Ascending aorta (tissue), 2 donors: ENCODE measurements at regions of chr2 and their contacts with region 1.

Region 1: DNA sequence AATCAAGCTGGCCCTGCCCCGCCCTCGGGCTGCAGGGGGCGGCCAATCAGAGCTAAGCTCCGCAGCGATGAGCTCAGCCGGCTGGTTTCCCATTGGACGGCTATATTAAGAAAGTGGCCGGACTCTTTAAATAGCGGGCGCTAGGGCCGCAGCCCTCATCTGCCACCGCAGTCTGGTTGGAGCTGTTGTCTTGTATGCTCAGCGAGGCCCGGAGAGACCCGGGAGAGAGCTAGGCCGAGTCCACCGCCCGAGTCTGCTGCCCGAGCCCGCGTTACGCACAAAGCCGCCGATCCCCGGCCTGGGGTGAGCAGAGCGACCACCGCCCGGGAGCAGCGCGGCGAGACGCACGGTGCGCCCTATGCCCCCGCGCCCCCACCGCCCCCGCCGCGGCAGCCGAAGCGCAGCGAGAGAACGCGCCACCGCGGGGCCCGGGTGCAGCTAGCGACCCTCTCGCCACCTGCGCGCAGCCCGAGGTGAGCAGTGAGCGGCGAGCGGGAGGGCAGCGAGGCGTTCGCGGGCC is at the start of gene RHOB:
- DNase-seq: peak; percentile 91 to 99
- H3K4me3 ChIP-seq: peak within 1 kb of the TSS; percentile 80 to 95
- H3K27ac ChIP-seq: peak within 1 kb of the TSS; percentile 90 to 96
- H3K4me1 ChIP-seq: peaks cover 3 to 12% of the 10 kb centered on the region in 2 donors
- H3K27me3 ChIP-seq: no peaks in the 10 kb centered on the region
- CTCF ChIP-seq: no peak
- total RNA-seq, gene RHOB: 3,143 TPM

Region 2: DNA sequence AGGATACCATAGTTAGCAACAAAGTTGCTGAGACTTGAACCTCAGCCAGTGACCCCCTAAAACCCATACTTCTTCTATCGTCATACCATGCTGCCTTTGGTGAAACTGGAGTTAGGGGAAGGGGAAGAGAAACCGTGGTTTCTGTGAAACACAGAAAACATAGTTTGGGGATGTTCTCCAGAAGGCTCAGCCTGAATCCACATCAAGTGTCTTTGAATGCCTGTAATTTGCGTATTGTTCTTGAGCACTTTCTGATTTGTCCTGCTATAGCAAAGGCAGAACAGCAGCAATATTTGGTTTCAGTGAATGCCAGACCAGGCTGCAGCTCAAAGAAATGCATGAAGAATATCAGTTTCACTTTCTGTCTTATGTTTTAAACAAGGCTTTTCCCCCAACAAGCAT is 803.9 kb before region 1 on chr2:
- intact Hi-C with region 1: no loop called
- DNase-seq: no peak
- H3K4me3 ChIP-seq: no peak overlapping the region
- H3K27ac ChIP-seq: no peak overlapping the region
- H3K4me1 ChIP-seq: no peaks in the 10 kb centered on the region
- H3K27me3 ChIP-seq: no peaks in the 10 kb centered on the region
- CTCF ChIP-seq: no peak

Region 3: GRCh38 chr2:20378792-20379519 is 68.0 kb before region 1 on chr2:
- intact Hi-C with region 1: no loop called
- DNase-seq: peak; percentile 44 to 92
- H3K4me3 ChIP-seq: no peak overlapping the region
- H3K27ac ChIP-seq: peak overlapping the region; percentile 4 to 54
- H3K4me1 ChIP-seq: peaks cover 0 to 6% of the 10 kb centered on the region in 2 donors
- H3K27me3 ChIP-seq: no peaks in the 10 kb centered on the region
- CTCF ChIP-seq: peak; percentile 75 to 93 (median 80)

Region 4: DNA sequence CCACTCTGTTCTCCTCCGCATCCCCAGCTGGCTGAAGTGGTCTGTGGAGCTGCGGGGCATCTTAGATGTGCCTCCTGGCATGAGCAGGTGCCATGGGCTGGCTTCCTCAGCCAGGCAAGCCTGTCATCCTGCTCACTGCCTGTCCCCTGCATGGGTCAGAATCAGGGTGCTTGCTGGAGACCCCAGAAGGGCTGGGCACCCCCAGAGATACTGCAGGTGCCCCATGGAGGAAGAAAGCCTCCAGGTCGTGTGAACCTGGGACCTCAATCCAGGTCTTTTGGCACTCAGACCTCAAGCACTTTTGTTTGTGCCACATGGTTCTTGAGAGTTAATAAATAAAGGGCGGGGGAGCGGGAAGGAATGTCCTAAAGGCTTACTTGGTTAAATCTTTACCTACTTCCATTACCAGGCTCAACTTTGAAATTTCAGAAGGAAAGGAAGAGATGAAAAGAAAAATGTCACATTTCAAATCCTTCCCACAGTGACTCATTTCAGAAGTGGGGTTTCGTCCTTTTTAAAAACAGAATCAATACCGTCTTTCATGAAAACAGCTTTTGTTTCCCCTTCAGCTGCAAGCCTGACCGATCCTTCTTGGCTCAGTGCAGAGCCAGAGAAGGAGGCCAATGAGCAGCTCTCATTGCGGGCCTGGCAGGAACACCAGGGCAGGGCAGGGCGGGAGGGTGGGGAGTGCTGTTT is 69.8 kb after region 1 on chr2:
- intact Hi-C with region 1: loop called (anchors 10 kb)
- DNase-seq: no peak
- H3K4me3 ChIP-seq: no peak overlapping the region
- H3K27ac ChIP-seq: peak overlapping the region in 1 of 2 donors; percentile 16
- H3K4me1 ChIP-seq: peaks cover 2 to 6% of the 10 kb centered on the region in 2 donors
- H3K27me3 ChIP-seq: no peaks in the 10 kb centered on the region
- CTCF ChIP-seq: no peak

Region 5: DNA sequence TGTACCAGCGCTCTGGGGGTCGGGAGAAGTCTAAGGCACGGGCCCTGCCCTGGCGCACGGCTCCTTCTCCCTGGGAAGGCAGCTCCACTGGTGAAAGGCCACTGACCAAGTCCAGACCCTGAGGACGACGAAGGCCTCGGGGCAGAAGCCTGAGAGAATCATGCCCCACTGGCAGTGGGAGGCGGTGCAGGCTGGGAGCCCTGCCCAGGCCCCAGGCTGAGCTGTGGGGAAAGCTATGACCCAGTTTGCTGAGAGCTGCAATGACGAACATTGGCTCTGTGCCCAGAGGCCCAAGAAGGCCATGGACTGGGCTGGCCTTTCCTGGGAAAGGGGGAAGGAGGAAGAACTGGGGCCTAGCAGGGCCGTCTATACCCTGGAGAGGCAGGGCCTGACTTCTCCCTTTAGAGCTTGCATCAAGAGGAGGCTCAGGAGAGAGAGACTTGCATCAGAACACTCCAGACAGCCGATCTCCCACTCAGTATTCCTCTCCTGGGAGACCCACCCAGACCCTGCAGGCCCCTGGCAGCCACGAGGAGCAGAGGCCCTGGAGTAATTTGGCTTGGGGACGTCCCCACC is 171.0 kb after region 1 on chr2:
- intact Hi-C with region 1: loop called (anchors 1 kb)
- DNase-seq: peak; percentile 94 to 99
- H3K4me3 ChIP-seq: peak overlapping the region in 1 of 2 donors; percentile 7
- H3K27ac ChIP-seq: peak overlapping the region; percentile 97 to 98
- H3K4me1 ChIP-seq: peaks cover 51 to 59% of the 10 kb centered on the region in 2 donors
- H3K27me3 ChIP-seq: no peaks in the 10 kb centered on the region
- CTCF ChIP-seq: peak; percentile 49 to 76 (median 54)